Pancreas (tissue), 10 donors: ENCODE measurements at regions of chr20 and their contacts with region 1.

Region 1: DNA sequence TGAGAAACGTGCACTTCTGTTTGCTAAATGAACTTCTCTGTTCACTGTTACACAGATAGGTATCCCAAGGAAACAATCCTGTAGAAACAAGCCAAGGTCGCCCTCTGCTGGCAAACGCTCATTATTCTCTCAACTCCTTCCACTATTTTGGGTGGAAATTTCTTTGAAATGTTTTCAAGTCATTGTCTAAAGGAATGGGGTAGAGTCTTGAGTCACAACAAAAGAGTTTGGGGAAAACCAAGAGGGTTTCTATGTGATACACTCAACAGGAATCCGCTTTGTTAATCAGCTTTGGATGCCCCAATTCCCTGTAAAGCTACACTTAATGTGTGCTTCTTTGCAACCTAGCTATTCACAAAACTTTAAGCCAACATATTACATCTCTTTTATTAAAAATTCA is 4.6 kb upstream of the RAE1 start:
- DNase-seq: peak; percentile 40 to 86 (median 67)
- ATAC-seq: peak; percentile 41 to 81 (median 64)
- H3K4me3 ChIP-seq: no peak overlapping the region
- H3K27ac ChIP-seq: no peak overlapping the region
- H3K4me1 ChIP-seq: no peaks in the 10 kb centered on the region
- H3K27me3 ChIP-seq: peaks cover 0 to 6% (median 0%) of the 10 kb centered on the region in 4 donors
- CTCF ChIP-seq: peak; percentile 37 to 65 (median 50)

Region 2: DNA sequence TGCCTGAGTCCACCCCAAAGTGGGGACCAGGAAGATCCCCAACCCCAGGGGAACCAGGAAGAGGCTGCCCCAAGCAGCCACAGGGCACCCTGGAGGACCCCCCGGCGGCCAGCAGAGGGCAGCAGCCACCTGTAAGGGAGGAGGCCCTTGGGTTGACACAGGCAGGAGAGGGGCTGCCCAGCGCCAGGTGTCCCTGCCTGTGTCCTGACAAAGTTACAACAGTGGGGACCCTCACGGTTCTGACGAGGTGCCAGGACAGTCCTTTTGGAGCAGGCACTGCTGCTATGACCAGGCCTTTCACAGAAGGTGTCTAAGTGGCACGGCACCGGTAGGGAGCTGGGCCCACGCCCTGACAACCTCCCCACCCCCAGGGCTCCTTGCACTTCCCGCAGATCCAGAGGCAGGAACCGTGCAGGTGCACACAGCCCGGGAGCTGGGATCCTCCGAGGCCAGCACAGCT is 256.8 kb before region 1 on chr20:
- intact Hi-C with region 1: loop called in 2 of 3 experiments (anchors 5 kb)
- DNase-seq: peak; percentile 46 to 92 (median 76)
- ATAC-seq: peak; percentile 86 to 93 (median 92)
- H3K4me3 ChIP-seq: no peak overlapping the region
- H3K27ac ChIP-seq: no peak overlapping the region
- H3K4me1 ChIP-seq: no peaks in the 10 kb centered on the region
- H3K27me3 ChIP-seq: peaks cover 0 to 2% (median 0%) of the 10 kb centered on the region in 4 donors
- CTCF ChIP-seq: peak; percentile 89 to 91 (median 91)

Region 3: GRCh38 chr20:57250607-57251343 is 95.7 kb before region 1 on chr20:
- intact Hi-C with region 1: no loop called
- DNase-seq: no peak
- ATAC-seq: no peak
- H3K4me3 ChIP-seq: no peak overlapping the region
- H3K27ac ChIP-seq: no peak overlapping the region
- H3K4me1 ChIP-seq: no peaks in the 10 kb centered on the region
- H3K27me3 ChIP-seq: no peaks in the 10 kb centered on the region
- CTCF ChIP-seq: no peak